ENCODE measurements at regions of chr20 and their contacts with region 1.

Region 1: DNA sequence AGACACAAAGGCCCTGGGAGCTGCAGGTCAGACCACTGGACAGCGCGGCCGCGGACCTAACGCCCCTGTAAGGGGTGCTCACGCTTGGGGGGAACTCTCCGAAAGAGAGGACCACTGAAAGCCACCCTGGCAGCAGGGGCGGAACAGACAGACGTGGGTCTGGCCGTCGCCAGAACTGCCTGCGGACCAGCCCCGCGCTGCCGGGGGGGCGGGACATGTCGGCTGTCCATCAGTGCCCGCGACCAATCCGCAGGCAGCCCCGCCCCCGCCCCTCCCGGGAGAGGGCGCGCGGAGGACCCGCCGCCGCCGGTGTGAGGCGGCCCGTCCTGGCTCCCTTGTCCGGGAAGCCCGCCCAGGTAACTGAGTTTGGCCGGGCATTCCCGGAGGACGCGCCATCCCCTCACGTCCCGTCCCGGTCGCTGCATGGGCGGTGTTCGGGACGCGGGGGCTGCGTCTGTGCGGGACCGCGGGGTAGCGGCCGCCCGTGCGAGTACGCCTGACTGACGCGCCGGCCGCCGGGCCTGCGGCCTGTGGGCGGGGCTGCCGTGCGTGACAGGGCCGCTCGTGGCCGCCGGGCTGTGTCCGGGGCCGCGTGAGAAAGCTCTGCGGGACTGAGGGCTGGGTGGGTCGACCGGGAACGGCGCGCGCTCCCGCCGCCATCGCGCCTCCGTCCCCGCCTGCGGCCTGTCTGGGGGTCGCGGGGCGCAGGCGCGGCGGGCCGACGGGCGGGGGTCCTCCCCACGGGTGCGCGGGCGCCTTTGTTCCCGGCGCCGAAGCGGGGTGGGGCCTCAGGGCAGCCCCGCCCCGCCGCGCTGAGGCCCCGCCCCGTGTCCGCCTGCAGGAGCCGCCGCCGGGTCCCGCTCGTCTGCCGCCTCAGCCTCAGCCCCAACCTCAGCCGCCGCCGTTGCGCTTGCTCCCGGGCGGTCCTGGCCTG is at the start of gene PLCG1:
- DNase-seq: peak; percentile 66 to 92 (median 82)
- ATAC-seq: peak; percentile 68
- H3K4me3 ChIP-seq: peak within 1 kb of the TSS; percentile 90
- H3K4me3 Mint-ChIP-seq: peak within 1 kb of the TSS; percentile 95
- H3K27ac ChIP-seq: peak within 1 kb of the TSS; percentile 75 to 83
- H3K27ac Mint-ChIP-seq: peak within 1 kb of the TSS; percentile 96
- H3K4me1 ChIP-seq: peaks cover 59% of the 10 kb centered on the region
- H3K4me1 Mint-ChIP-seq: peaks cover 69% of the 10 kb centered on the region
- H3K27me3 ChIP-seq: no peaks in the 10 kb centered on the region
- H3K27me3 Mint-ChIP-seq: no peaks in the 10 kb centered on the region
- CTCF ChIP-seq: no peak
- total RNA-seq, gene PLCG1: 387 to 404 TPM

Region 2: GRCh38 chr20:41028348-41029148 is 108.4 kb before region 1 on chr20 and contains the start of gene TOP1:
- CTCF ChIA-PET with region 1: no interaction called
- POLR2A ChIA-PET with region 1: no interaction called
- intact Hi-C with region 1: loop called in 1 of 2 experiments (anchors 5 kb)
- DNase-seq: peak; percentile 99 to 100 (median 100)
- ATAC-seq: peak; percentile 97
- H3K4me3 ChIP-seq: peak within 1 kb of the TSS; percentile 83
- H3K4me3 Mint-ChIP-seq: peak within 1 kb of the TSS; percentile 98
- H3K27ac ChIP-seq: peak within 1 kb of the TSS; percentile 86 to 93
- H3K27ac Mint-ChIP-seq: peak within 1 kb of the TSS; percentile 98
- H3K4me1 ChIP-seq: peaks cover 36% of the 10 kb centered on the region
- H3K4me1 Mint-ChIP-seq: peaks cover 53% of the 10 kb centered on the region
- H3K27me3 ChIP-seq: no peaks in the 10 kb centered on the region
- H3K27me3 Mint-ChIP-seq: no peaks in the 10 kb centered on the region
- CTCF ChIP-seq: no peak
- total RNA-seq, gene TOP1: 37.6 to 41.7 TPM

Region 3: DNA sequence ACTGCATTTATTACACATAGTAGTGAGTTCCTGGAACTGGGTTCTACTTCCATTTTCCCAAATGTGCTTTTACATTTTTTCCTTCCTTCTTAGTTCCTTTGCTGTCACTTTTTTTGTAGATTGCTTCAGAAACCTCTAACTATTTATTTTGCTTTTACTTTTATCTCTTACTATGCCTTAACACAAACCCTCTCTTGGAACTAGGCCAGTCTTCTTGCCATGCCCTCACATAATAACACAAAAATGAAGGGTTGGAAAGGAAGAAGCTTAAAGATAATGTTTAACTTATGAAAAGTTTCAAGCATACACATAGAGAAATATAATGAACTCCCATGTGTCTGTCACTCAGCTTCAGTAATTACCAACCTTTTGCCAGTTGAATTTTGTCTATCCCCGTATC is 81.3 kb before region 1 on chr20:
- CTCF ChIA-PET with region 1: no interaction called
- POLR2A ChIA-PET with region 1: no interaction called
- intact Hi-C with region 1: no loop called
- DNase-seq: no peak
- ATAC-seq: no peak
- H3K4me3 ChIP-seq: no peak overlapping the region
- H3K4me3 Mint-ChIP-seq: no peak overlapping the region
- H3K27ac ChIP-seq: no peak overlapping the region
- H3K27ac Mint-ChIP-seq: no peak overlapping the region
- H3K4me1 ChIP-seq: peaks cover 19% of the 10 kb centered on the region
- H3K4me1 Mint-ChIP-seq: peaks cover 84% of the 10 kb centered on the region
- H3K27me3 ChIP-seq: no peaks in the 10 kb centered on the region
- H3K27me3 Mint-ChIP-seq: no peaks in the 10 kb centered on the region
- CTCF ChIP-seq: no peak

Region 4: GRCh38 chr20:41161886-41162285 is 24.9 kb after region 1 on chr20:
- CTCF ChIA-PET with region 1: interaction called, 66 read pairs
- POLR2A ChIA-PET with region 1: interaction called, 403 read pairs
- intact Hi-C with region 1: loop called in 1 of 2 experiments (anchors 1 kb)
- DNase-seq: peak in 3 of 14 experiments; percentile 42 to 61 (median 44)
- ATAC-seq: no peak
- H3K4me3 ChIP-seq: no peak overlapping the region
- H3K4me3 Mint-ChIP-seq: peak overlapping the region; percentile 70
- H3K27ac ChIP-seq: peak overlapping the region; percentile 78 to 85
- H3K27ac Mint-ChIP-seq: peak overlapping the region; percentile 96
- H3K4me1 ChIP-seq: peaks cover 89% of the 10 kb centered on the region
- H3K4me1 Mint-ChIP-seq: peaks cover 77% of the 10 kb centered on the region
- H3K27me3 ChIP-seq: no peaks in the 10 kb centered on the region
- H3K27me3 Mint-ChIP-seq: no peaks in the 10 kb centered on the region
- CTCF ChIP-seq: no peak

Region 5: DNA sequence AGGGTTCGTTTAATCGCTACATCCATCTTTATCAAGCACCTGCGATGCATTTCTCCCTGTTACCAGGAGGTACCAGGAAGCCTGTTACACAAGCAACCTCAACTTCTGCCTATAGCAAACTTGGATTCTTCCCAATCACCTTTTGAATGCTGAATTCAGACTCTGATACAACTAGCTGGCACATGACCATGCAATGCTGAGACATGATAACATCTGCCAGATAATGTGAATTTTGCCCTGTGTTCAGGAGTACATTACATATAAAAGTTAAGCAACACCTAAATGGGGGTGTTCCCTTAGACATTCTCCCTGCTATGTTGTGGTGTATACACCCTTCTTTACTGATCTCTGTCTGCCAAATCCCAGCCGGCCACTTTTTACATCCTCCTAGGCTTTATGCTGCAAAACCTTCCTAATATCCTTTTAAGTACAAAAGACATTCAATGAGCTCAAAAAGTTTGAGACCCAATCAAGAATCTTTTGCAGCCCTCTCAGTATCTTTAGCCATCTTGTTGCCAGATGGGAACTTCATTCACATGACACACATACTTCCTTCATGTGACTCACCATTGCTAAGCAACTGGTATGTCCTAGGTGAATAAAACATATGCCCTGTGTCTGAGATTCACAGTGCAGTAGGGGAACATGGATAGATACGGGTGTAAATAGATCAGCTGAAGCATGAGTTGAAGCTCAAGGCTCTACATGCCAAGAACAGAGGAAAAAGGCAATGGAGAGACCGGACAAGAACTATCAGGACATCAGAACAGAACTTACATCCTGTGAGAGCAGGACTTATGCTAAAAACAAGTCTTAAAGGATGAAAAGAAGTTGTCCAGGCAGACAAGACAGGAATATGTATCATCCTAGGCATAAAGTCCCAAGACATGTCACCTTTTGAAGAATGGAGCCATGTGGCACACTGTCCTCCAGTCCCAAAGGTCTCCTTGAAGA is 96.3 kb after region 1 on chr20:
- CTCF ChIA-PET with region 1: interaction called, 30 read pairs
- POLR2A ChIA-PET with region 1: interaction called, 36 read pairs
- intact Hi-C with region 1: loop called (anchors 1 kb)
- DNase-seq: no peak
- ATAC-seq: no peak
- H3K4me3 ChIP-seq: no peak overlapping the region
- H3K4me3 Mint-ChIP-seq: no peak overlapping the region
- H3K27ac ChIP-seq: no peak overlapping the region
- H3K27ac Mint-ChIP-seq: no peak overlapping the region
- H3K4me1 ChIP-seq: peaks cover 11% of the 10 kb centered on the region
- H3K4me1 Mint-ChIP-seq: peaks cover 26% of the 10 kb centered on the region
- H3K27me3 ChIP-seq: no peaks in the 10 kb centered on the region
- H3K27me3 Mint-ChIP-seq: no peaks in the 10 kb centered on the region
- CTCF ChIP-seq: no peak

Region 6: DNA sequence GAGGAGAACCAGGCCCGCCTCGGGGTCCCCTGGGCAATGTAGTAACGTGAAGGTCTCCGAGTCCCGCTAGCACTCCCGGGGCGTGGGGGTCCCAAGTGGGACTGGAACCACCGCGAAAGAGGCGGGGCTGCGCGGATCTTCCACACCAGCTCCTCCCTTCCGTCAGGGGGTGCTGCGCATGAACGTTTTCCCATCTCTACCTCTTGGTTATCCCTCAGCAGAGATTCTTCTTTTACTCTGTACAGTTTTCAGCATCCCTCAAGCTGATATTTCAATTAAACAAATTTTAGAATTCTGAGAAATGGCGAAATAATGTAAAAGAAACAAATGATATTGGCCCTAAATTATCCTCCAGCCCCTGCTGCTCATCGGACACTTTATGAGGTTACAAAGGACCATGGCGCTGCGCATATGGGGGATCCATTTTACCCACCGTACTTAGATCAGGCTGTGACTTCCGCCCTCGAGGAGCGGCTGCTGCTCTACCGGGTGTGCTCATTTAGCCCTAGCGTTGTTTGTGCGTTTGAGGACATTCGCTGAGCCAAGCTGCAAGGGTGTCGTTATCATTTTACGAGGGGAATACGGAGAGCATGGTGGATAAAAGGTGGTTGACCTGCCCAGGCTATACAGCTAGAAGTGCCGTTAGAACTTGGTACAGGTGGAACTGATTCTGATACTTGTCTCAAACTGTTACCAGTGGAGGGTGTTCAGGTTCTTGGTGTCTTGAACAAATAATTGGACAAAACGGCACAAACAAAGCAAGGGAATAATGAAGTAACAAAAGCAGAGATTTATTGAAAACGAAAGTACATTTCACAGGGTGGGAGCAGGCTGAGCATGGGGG is 556.4 kb after region 1 on chr20:
- CTCF ChIA-PET with region 1: no interaction called
- POLR2A ChIA-PET with region 1: interaction called, 4 read pairs
- intact Hi-C with region 1: loop called in 1 of 2 experiments (anchors 10 kb)
- DNase-seq: peak; percentile 67 to 93 (median 76)
- ATAC-seq: peak; percentile 86
- H3K4me3 ChIP-seq: peak overlapping the region; percentile 83
- H3K4me3 Mint-ChIP-seq: peak overlapping the region; percentile 90
- H3K27ac ChIP-seq: peak overlapping the region; percentile 76 to 87
- H3K27ac Mint-ChIP-seq: peak overlapping the region; percentile 87
- H3K4me1 ChIP-seq: peaks cover 14% of the 10 kb centered on the region
- H3K4me1 Mint-ChIP-seq: peaks cover 27% of the 10 kb centered on the region
- H3K27me3 ChIP-seq: peaks cover 0 to 3% of the 10 kb centered on the region in 2 experiments
- H3K27me3 Mint-ChIP-seq: peaks cover 5% of the 10 kb centered on the region
- CTCF ChIP-seq: peak; percentile 53